ENCODE measurements at regions of chr6 and their contacts with region 1.

Region 1: DNA sequence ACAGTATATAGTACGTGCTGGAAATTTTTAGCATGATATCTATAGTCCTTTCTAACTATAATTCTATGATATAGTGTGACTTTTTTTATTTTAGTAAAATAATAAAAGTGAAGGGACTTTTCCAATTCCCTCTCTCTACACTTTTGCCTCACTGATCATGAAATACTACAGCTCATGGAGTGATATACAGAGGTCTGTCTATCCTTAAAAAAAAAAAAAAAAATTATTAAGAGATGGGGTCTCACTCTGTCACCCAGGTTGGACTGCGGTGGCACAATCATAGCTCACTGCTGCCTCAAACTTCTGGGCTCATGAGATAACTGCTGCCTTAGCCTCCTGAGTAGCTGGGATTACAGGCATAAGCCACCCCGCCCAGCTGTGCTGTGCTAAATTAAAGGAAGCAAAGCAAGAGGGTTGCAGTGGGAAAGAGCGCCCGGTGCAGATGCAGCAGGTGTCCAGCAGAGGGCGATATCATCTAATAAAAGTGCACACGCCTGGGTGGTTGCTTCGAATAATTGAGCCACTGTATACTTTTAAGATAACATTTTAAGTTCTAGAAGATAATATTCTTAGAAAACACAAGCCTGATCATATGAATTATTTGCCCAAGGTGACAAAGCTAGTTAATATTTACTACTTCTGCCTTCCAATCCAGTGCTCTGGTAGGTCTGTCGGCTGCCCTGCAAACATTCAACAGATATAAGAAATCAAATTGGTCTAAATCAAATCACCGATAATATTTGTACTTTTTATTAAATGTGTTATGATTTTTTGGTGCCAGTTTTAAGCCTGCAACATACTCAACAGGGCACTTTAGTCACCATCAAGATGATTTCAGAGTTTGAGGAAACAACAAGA is 94.9 kb upstream of the NT5E start:
- DNase-seq: peak; percentile 28 to 77 (median 56)
- ATAC-seq: peak; percentile 99
- H3K4me3 ChIP-seq: no peak overlapping the region
- H3K27ac ChIP-seq: no peak overlapping the region
- H3K4me1 ChIP-seq: no peaks in the 10 kb centered on the region
- H3K27me3 ChIP-seq: no peaks in the 10 kb centered on the region
- CTCF ChIP-seq: peak; percentile 93 to 94

Region 2: GRCh38 chr6:85470034-85470431 is 115.0 kb after region 1 on chr6:
- intact Hi-C with region 1: loop called in 1 of 2 experiments (anchors 10 kb)
- DNase-seq: no peak
- ATAC-seq: no peak
- H3K4me3 ChIP-seq: no peak overlapping the region
- H3K27ac ChIP-seq: no peak overlapping the region
- H3K4me1 ChIP-seq: peaks cover 0 to 8% of the 10 kb centered on the region in 2 donors
- H3K27me3 ChIP-seq: no peaks in the 10 kb centered on the region
- CTCF ChIP-seq: no peak

Region 3: DNA sequence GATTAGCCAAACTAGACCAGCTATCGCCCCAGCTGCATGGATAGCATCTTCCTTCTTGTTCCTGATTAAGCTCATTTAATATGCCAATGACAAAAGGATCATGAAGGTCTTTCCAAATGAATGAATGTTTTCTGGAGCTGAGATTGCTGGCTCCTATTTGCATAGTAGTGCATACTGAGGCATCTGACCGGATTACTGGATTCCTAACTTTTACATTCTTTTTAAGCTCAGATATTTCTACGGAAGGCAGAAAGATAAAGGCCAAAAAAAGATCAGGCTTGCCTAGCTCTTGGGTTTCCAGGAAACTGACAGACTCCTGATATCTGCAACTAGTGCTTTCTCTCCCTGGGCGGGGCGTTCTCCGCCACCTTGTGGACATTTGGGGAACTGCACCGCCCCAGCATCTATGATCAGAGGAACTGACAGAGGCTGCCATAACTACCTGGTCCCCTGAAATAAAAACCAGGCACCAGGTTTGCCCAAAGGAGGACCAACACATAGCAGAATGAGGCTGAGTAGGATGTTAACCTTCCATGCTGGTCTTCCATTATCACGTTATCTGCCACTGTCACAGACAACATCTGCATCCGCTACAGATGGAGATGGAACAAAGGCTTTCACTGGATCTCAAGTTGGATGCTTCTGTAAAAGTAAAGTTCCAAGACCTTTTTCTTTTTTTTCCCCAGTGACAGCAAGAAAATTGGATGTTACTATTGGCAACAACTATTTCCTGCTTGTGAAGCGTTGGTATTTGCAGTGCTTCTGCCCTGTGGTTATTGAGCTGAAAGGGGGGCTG is 128.1 kb after region 1 on chr6:
- intact Hi-C with region 1: loop called (anchors 5 to 10 kb)
- DNase-seq: peak; percentile 52 to 93 (median 64)
- ATAC-seq: peak; percentile 98
- H3K4me3 ChIP-seq: no peak overlapping the region
- H3K27ac ChIP-seq: no peak overlapping the region
- H3K4me1 ChIP-seq: no peaks in the 10 kb centered on the region
- H3K27me3 ChIP-seq: no peaks in the 10 kb centered on the region
- CTCF ChIP-seq: peak; percentile 99 to 100

Region 4: DNA sequence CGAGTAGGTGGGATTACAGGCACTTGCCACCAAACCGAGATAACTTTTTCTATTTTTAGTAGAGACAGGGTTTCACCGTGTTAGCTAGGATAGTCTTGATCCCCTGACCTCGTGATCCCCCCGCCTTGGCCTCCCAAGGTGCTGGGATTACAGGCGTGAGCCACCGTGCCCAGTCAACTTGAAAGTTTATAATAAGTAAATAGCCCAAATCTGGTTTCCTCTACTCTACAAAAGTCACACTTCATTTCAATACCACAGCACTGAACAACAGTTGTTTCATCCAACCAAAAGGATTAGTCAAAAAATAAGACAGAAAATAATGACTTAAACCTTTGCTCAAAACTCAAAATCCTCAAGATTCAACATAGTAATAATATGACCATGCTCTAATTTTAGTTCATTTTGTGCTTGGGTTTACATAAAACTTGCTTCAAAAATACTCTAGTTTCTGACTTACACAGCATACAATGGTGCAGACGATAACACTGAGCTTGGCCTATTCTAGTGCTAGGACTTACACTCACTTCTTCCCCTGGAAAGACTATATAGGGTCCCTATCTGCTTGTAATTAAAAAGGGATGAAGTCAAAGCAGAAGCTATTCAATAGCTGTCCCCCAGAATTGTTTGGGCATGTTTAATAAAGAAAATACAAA is 151.6 kb after region 1 on chr6:
- intact Hi-C with region 1: no loop called
- DNase-seq: no peak
- ATAC-seq: no peak
- H3K4me3 ChIP-seq: no peak overlapping the region
- H3K27ac ChIP-seq: no peak overlapping the region
- H3K4me1 ChIP-seq: no peaks in the 10 kb centered on the region
- H3K27me3 ChIP-seq: no peaks in the 10 kb centered on the region
- CTCF ChIP-seq: no peak